Mammary epithelial cell (primary cell): ENCODE measurements at regions of chr21 and their contacts with region 1.

Region 1: DNA sequence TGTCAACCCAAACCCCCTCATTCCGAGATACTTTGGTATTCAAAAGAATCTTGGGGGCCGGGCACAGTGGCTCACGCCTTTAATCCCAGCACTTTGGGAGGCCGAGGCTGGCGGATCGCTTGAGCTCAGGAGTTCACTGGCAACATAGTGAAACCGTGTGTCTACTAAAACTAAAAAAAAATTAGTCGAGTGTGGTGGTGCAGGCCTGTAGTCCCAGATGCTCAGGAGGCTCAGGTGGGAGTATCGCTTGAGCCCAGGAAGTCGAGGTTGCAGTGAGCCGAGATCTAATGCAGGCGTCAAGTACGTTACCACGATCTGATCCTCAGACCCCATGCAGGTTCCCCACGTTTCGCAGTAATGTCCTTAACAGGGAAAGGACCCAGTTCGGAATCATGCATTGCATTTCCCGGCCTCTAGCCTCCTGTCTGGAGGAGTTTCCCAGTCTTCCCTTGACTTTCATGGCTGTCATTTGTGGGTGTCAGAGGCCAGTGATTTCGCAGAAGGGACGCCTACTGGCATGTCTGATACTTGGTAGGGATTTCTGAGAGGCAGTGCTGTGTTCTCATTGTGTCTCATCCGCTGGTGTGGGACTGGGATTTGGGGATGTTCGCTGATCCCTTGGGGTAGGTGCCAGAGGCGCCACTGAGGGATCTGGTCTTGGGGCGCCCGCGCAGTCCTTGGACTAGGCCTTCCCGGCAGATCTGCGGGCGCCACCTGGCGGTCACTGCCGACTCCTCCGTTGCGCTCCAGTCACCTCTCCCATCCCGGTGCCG is 39.3 kb upstream of the HMGN1 start:
- DNase-seq: peak; percentile 79
- H3K4me3 ChIP-seq: peak overlapping the region; percentile 54 to 61 (median 55)
- H3K27ac ChIP-seq: peak overlapping the region; percentile 68
- H3K4me1 ChIP-seq: peaks cover 31% of the 10 kb centered on the region
- H3K27me3 ChIP-seq: no peaks in the 10 kb centered on the region
- CTCF ChIP-seq: peak; percentile 88 to 96

Region 2: DNA sequence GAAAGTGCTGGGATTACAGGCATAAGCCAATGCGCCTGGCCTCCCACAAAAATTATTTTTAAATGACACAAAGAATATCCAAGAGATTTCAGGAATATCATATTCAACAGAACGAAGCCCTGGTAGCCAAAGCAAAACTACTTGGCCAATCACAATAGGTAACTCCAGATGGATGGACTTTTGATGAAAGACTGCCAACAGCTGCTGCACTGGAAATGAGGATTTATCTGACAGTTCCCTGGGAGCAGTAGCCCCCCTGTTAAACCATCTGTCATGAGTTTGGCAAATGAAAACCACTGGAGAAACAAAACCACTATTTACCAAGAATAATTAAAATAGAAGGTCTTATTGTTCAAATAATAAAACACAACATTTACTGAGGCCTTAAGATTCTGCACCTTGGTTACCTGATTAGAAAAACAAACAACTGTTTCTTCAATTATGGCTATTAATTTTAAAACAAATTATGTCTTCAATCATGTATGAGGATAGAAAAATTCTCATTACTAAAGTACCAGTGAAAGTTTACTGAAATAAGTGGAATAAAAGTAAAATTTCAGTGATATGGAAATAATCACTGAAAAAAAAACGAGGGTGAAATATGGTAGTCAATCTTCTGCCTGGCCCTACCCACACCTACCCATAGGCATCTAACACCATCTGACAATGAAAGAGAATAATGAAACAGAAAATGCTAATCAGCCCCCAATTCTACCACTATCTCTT is 170.7 kb before region 1 on chr21:
- CTCF ChIA-PET with region 1: no interaction called
- dilution Hi-C with region 1: no loop called
- in situ Hi-C with region 1: no loop called
- intact Hi-C with region 1: no loop called
- DNase-seq: no peak
- H3K4me3 ChIP-seq: no peak overlapping the region
- H3K27ac ChIP-seq: no peak overlapping the region
- H3K4me1 ChIP-seq: no peaks in the 10 kb centered on the region
- H3K27me3 ChIP-seq: no peaks in the 10 kb centered on the region
- CTCF ChIP-seq: no peak

Region 3: GRCh38 chr21:39232861-39233291 is 155.3 kb before region 1 on chr21:
- CTCF ChIA-PET with region 1: interaction called, 22 read pairs
- dilution Hi-C with region 1: no loop called
- in situ Hi-C with region 1: no loop called
- intact Hi-C with region 1: no loop called
- DNase-seq: no peak
- H3K4me3 ChIP-seq: no peak overlapping the region
- H3K27ac ChIP-seq: no peak overlapping the region
- H3K4me1 ChIP-seq: no peaks in the 10 kb centered on the region
- H3K27me3 ChIP-seq: no peaks in the 10 kb centered on the region
- CTCF ChIP-seq: no peak

Region 4: DNA sequence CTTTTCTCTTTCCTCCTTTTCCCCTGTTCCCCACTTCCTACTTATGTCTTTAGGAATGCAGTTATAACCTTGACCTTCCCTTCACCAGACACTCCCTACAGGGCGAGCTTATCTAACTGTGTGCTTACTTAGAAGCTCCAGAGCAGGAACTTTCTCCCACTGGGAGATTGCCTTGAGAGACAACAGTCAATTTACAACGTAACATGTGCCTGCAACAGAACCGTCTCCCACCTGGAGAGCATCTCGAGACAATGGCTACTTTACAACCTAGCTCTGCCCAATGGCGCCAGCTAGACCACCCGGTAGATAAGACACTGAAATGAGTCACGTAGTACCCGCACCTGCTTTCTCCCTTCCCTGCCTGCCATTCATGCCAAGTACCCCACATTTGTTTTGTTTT is 56.0 kb before region 1 on chr21:
- CTCF ChIA-PET with region 1: interaction called, 22 read pairs
- dilution Hi-C with region 1: no loop called
- in situ Hi-C with region 1: no loop called
- intact Hi-C with region 1: loop called (anchors 1 kb)
- DNase-seq: no peak
- H3K4me3 ChIP-seq: no peak overlapping the region
- H3K27ac ChIP-seq: no peak overlapping the region
- H3K4me1 ChIP-seq: no peaks in the 10 kb centered on the region
- H3K27me3 ChIP-seq: no peaks in the 10 kb centered on the region
- CTCF ChIP-seq: no peak

Region 5: DNA sequence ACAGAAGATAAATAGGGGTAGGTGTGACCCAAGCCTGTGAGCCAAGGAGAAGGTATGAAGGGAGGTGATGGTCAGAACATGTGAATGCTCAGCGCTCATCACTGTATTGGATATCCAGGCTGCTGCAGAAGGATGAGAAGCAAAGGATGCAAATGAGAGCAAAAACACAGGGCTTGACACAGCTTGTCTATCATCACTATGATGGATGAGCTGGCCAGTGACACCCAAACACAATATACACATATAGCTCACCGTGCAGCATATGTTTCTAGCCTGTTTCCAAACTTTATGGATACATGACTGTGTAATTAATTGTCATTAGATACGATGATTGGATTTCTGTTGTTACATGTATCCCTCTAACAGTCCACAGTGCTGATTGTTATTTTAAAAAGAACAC is 25.5 kb before region 1 on chr21:
- CTCF ChIA-PET with region 1: no interaction called
- dilution Hi-C with region 1: no loop called
- in situ Hi-C with region 1: no loop called
- intact Hi-C with region 1: no loop called
- DNase-seq: no peak
- H3K4me3 ChIP-seq: no peak overlapping the region
- H3K27ac ChIP-seq: no peak overlapping the region
- H3K4me1 ChIP-seq: no peaks in the 10 kb centered on the region
- H3K27me3 ChIP-seq: no peaks in the 10 kb centered on the region
- CTCF ChIP-seq: no peak

Region 6: GRCh38 chr21:39373644-39374043 is 14.6 kb before region 1 on chr21:
- CTCF ChIA-PET with region 1: interaction called, 8 read pairs
- dilution Hi-C with region 1: no loop called
- in situ Hi-C with region 1: no loop called
- intact Hi-C with region 1: loop called (anchors 1 kb)
- DNase-seq: peak; percentile 58
- H3K4me3 ChIP-seq: no peak overlapping the region
- H3K27ac ChIP-seq: no peak overlapping the region
- H3K4me1 ChIP-seq: no peaks in the 10 kb centered on the region
- H3K27me3 ChIP-seq: no peaks in the 10 kb centered on the region
- CTCF ChIP-seq: peak; percentile 25 to 40

Region 7: DNA sequence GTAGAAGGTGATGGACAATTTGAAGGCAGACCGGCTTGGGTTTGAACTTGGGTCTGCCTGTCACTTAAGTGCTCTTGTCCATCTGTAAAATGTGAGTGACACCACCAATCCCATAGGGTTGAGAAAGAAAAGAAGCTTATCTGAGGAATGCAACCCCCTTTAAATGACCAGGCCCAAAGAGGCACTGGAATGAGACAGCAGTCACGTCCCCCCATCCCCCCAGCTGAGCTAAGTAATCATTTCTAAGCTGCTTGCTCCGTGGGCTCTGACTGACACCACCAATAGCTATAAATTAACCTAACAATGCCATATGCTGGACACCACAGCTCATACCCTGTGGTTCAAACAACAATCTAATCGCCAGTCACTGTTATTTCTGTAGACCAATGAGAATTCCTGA is 42.2 kb after region 1 on chr21:
- CTCF ChIA-PET with region 1: no interaction called
- dilution Hi-C with region 1: no loop called
- in situ Hi-C with region 1: no loop called
- intact Hi-C with region 1: no loop called
- DNase-seq: no peak
- H3K4me3 ChIP-seq: no peak overlapping the region
- H3K27ac ChIP-seq: no peak overlapping the region
- H3K4me1 ChIP-seq: no peaks in the 10 kb centered on the region
- H3K27me3 ChIP-seq: no peaks in the 10 kb centered on the region
- CTCF ChIP-seq: no peak

Region 8: GRCh38 chr21:39447264-39447663 is 59.0 kb after region 1 on chr21:
- CTCF ChIA-PET with region 1: no interaction called
- dilution Hi-C with region 1: no loop called
- in situ Hi-C with region 1: no loop called
- intact Hi-C with region 1: no loop called
- DNase-seq: no peak
- H3K4me3 ChIP-seq: no peak overlapping the region
- H3K27ac ChIP-seq: no peak overlapping the region
- H3K4me1 ChIP-seq: peaks cover 7% of the 10 kb centered on the region
- H3K27me3 ChIP-seq: no peaks in the 10 kb centered on the region
- CTCF ChIP-seq: no peak